Dorsolateral prefrontal cortex (tissue), 120 donors: ENCODE measurements at regions of chr10 and their contacts with region 1.

Region 1: GRCh38 chr10:59625721-59626522 is 83.7 kb downstream of the SLC16A9 start:
- DNase-seq: peak in 7 of 10 donors; percentile 19 to 68 (median 48)
- H3K4me3 ChIP-seq: peak overlapping the region in 15 of 59 donors; percentile 15 to 40 (median 28)
- H3K27ac ChIP-seq: peak overlapping the region in 33 of 59 donors; percentile 1 to 81 (median 48)
- H3K27me3 ChIP-seq: no peaks in the 10 kb centered on the region
- CTCF ChIP-seq: peak; percentile 79 to 99 (median 91)

Region 2: GRCh38 chr10:58781873-58782488 is 843.9 kb before region 1 on chr10:
- intact Hi-C with region 1: loop called in 1 of 2 experiments (anchors 5 kb)
- DNase-seq: no peak
- H3K4me3 ChIP-seq: peak overlapping the region in 1 of 59 donors; percentile 11
- H3K27ac ChIP-seq: peak overlapping the region in 9 of 59 donors; percentile 22 to 64 (median 33)
- H3K27me3 ChIP-seq: no peaks in the 10 kb centered on the region
- CTCF ChIP-seq: peak; percentile 44 to 91 (median 77)

Region 3: DNA sequence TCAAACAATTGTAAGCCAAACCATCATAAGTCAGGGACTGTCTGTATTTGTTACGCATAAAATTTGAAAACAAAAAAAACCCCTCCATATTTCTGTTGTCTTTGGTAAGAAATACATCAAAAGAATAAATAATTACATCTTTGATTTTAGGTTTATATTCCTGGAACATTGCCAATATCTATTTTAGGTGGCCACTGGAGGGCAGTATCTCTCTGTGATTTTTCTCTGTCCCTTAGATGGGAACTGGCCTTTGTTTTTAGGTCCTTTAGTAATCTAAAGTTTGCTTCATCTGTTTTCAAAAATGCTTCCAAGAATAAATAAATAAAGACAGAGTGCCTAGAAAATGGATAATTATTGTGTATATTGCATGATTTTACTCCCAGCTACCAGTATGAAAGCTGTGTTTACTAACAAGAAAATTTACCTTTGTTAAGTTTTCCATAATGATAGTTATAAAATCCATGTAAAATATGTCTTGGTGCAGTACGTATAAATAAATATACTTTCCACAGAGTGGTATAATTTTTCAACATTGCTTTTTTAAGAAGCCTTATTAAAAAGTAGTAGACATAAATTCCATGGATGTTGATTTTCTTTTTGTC is 385.2 kb before region 1 on chr10:
- intact Hi-C with region 1: loop called in 1 of 2 experiments (anchors 5 kb)
- DNase-seq: no peak
- H3K4me3 ChIP-seq: no peak overlapping the region
- H3K27ac ChIP-seq: peak overlapping the region in 57 of 59 donors; percentile 7 to 84 (median 68)
- H3K27me3 ChIP-seq: no peaks in the 10 kb centered on the region
- CTCF ChIP-seq: peak; percentile 63 to 95 (median 82)

Region 4: GRCh38 chr10:59557052-59557451 is 68.9 kb before region 1 on chr10:
- intact Hi-C with region 1: no loop called
- DNase-seq: no peak
- H3K4me3 ChIP-seq: no peak overlapping the region
- H3K27ac ChIP-seq: no peak overlapping the region
- H3K27me3 ChIP-seq: no peaks in the 10 kb centered on the region
- CTCF ChIP-seq: no peak

Region 5: DNA sequence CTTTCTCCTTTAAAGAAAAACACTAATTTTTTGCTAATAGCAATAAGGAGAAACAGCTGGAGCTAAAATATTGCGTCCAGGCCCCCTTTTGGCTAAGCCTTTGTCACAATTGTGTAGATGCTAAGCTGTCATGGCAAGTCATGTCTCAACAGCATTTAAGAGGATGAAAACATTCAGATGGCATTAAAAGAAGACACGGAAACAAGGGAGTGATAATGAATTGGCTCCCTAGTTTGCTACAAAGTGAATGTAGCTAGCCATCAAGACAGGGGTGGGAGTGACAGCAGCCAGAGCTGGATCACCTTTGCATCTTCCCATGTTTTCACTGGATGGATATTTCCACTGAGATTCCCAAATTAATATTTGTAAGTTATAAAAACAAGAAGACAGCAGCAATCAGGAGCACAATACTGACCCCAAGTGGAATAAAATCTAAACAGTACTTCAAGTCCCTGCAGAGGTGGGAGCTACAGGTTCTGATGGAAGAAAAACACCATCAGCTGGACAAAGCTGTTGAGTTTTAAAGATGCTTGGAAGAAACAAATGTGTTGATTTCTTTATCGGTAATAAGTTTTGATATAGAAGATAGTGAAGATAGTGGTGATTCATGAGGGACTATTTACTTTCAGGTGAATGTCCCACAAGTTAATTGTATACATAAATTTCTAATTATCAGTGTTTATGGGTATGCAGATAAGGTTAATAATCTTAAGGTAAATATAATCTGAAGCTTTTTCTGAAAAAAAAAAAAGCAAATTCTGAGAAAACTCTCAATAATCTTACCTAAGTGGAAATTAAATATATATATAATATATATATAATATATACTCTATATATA is 45.7 kb before region 1 on chr10:
- intact Hi-C with region 1: loop called in 1 of 2 experiments (anchors 5 kb)
- DNase-seq: no peak
- H3K4me3 ChIP-seq: peak overlapping the region in 1 of 59 donors; percentile 22
- H3K27ac ChIP-seq: peak overlapping the region in 33 of 59 donors; percentile 2 to 81 (median 46)
- H3K27me3 ChIP-seq: no peaks in the 10 kb centered on the region
- CTCF ChIP-seq: peak; percentile 35 to 86 (median 72)

Region 6: GRCh38 chr10:59830601-59831259 is 204.8 kb after region 1 on chr10:
- intact Hi-C with region 1: loop called (anchors 5 to 10 kb)
- DNase-seq: peak in 3 of 10 donors; percentile 35 to 55 (median 53)
- H3K4me3 ChIP-seq: no peak overlapping the region
- H3K27ac ChIP-seq: no peak overlapping the region
- H3K27me3 ChIP-seq: no peaks in the 10 kb centered on the region
- CTCF ChIP-seq: peak; percentile 40 to 86 (median 75)

Region 7: GRCh38 chr10:60032723-60033122 is 406.8 kb after region 1 on chr10:
- intact Hi-C with region 1: loop called in 1 of 2 experiments (anchors 10 kb)
- DNase-seq: peak in 1 of 10 donors; percentile 39
- H3K4me3 ChIP-seq: no peak overlapping the region
- H3K27ac ChIP-seq: peak overlapping the region in 28 of 59 donors; percentile 1 to 73 (median 40)
- H3K27me3 ChIP-seq: no peaks in the 10 kb centered on the region
- CTCF ChIP-seq: peak in 50 of 56 donors; percentile 15 to 64 (median 40)

Region 8: GRCh38 chr10:60434418-60435046 is 808.6 kb after region 1 on chr10:
- intact Hi-C with region 1: loop called in 1 of 2 experiments (anchors 10 kb)
- DNase-seq: peak in 3 of 10 donors; percentile 55 to 67 (median 66)
- H3K4me3 ChIP-seq: no peak overlapping the region
- H3K27ac ChIP-seq: peak overlapping the region in 22 of 59 donors; percentile 2 to 72 (median 38)
- H3K27me3 ChIP-seq: no peaks in the 10 kb centered on the region
- CTCF ChIP-seq: peak; percentile 60 to 95 (median 85)